ENCODE measurements at regions of chr10 and their contacts with region 1.

Region 1: DNA sequence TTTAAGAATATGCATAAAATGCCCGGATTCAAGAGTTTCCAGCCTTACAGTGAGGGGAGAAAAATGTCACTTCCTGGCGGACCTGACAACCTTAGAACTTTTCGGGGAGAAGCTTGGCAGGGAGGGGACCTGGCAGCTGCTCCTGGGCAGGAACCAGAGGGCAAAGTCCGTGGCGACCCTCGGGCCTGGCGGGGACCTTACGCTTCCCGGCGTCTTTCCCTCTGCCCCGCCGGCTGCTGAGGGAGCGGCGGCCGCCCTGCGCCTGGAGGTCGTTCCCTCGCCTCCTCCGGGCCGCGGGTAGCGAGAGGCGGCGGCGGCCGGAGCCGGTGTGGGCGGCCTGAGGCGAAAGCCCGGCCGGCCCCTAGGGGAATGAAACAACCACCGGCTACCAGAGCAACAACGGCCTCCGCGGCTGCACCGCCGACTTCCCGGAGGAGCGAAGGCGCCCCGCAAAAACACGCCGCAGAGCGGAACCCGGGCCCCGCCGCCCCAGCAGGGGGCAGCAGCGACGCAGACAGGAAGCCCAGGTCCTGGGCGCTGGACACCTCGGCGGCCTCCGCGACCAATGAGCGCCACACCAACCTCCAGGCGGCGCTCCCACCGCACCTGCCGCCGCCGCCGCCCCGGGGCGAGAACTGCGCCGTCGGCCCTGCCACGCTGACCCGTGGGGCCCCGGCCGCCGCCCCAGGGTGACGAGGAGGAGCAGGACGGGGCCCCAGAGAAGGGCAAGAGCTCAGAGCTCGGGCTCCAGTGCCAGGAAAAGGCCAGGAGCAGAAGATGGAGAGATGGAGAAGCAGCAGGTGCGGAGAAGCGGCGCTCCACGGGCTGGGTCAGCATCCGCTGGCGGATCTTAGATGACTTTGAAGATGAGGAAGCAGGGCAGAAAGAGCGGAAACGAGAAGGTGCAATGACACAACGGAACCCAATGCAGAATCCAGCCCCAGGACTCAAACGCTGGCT is 10.5 kb upstream of the ACSM6 start:
- DNase-seq: peak; percentile 89 to 95
- H3K4me3 ChIP-seq: peak overlapping the region; percentile 46
- H3K4me3 Mint-ChIP-seq: peak overlapping the region; percentile 72
- H3K27ac Mint-ChIP-seq: peak overlapping the region; percentile 89
- H3K4me1 ChIP-seq: peaks cover 38% of the 10 kb centered on the region
- H3K4me1 Mint-ChIP-seq: peaks cover 32% of the 10 kb centered on the region
- H3K27me3 ChIP-seq: no peaks in the 10 kb centered on the region
- H3K27me3 Mint-ChIP-seq: no peaks in the 10 kb centered on the region
- CTCF ChIP-seq: peak; percentile 90 to 94

Region 2: GRCh38 chr10:94630017-94630688 is 553.4 kb before region 1 on chr10:
- CTCF ChIA-PET with region 1: no interaction called
- POLR2A ChIA-PET with region 1: no interaction called
- intact Hi-C with region 1: loop called (anchors 1 kb)
- DNase-seq: peak in 1 of 2 experiments; percentile 29
- H3K4me3 ChIP-seq: no peak overlapping the region
- H3K4me3 Mint-ChIP-seq: no peak overlapping the region
- H3K27ac Mint-ChIP-seq: peak overlapping the region; percentile 42
- H3K4me1 ChIP-seq: peaks cover 43% of the 10 kb centered on the region
- H3K4me1 Mint-ChIP-seq: peaks cover 20% of the 10 kb centered on the region
- H3K27me3 ChIP-seq: no peaks in the 10 kb centered on the region
- H3K27me3 Mint-ChIP-seq: no peaks in the 10 kb centered on the region
- CTCF ChIP-seq: peak; percentile 55 to 59

Region 3: DNA sequence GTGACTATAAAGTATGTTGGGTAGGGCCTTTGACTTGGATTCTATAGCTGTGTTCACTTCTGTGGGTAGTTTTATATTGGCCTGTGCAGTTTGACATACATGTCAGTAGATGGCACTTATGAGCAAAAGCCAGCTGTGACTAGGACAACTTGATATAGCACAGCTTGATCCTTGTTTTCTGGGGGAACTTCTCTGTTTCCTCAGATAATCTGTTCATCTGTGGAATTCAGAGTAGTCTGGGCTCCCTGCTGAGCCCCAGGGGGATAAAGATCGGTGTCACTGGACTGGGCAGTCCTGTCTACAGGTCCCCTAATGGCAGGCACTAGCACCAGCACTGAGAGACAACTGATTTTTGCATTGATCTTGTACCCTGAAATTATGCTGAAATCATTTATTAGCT is 219.7 kb before region 1 on chr10:
- CTCF ChIA-PET with region 1: no interaction called
- POLR2A ChIA-PET with region 1: no interaction called
- intact Hi-C with region 1: loop called (anchors 2 kb)
- DNase-seq: peak; percentile 53 to 54
- H3K4me3 ChIP-seq: no peak overlapping the region
- H3K4me3 Mint-ChIP-seq: no peak overlapping the region
- H3K27ac Mint-ChIP-seq: no peak overlapping the region
- H3K4me1 ChIP-seq: no peaks in the 10 kb centered on the region
- H3K4me1 Mint-ChIP-seq: no peaks in the 10 kb centered on the region
- H3K27me3 ChIP-seq: no peaks in the 10 kb centered on the region
- H3K27me3 Mint-ChIP-seq: no peaks in the 10 kb centered on the region
- CTCF ChIP-seq: peak; percentile 73 to 77

Region 4: GRCh38 chr10:95221124-95221523 is 37.6 kb after region 1 on chr10:
- CTCF ChIA-PET with region 1: no interaction called
- POLR2A ChIA-PET with region 1: no interaction called
- intact Hi-C with region 1: loop called (anchors 5 kb)
- DNase-seq: peak; percentile 65 to 76
- H3K4me3 ChIP-seq: no peak overlapping the region
- H3K4me3 Mint-ChIP-seq: no peak overlapping the region
- H3K27ac Mint-ChIP-seq: peak overlapping the region; percentile 76
- H3K4me1 ChIP-seq: peaks cover 28% of the 10 kb centered on the region
- H3K4me1 Mint-ChIP-seq: no peaks in the 10 kb centered on the region
- H3K27me3 ChIP-seq: no peaks in the 10 kb centered on the region
- H3K27me3 Mint-ChIP-seq: no peaks in the 10 kb centered on the region
- CTCF ChIP-seq: no peak

Region 5: DNA sequence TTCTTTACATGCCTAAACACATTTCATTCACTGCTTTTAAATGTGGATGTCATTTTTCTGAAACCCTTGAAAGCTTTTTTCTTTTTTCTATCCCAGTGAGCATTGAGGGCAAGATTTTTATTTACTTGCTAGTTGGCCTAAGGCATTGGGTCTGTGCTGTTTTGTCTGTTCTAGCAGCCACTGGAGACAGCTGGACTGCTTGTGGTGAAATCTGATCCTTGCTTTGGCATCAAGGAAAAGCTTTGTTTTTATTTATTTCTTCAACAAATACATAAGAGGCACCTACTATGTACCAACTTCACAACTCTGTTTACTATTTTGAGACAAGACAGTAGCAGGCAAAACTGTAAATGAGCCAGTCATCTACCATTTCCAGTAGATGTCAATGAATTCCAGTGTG is 135.7 kb after region 1 on chr10:
- CTCF ChIA-PET with region 1: no interaction called
- POLR2A ChIA-PET with region 1: no interaction called
- intact Hi-C with region 1: no loop called
- DNase-seq: no peak
- H3K4me3 ChIP-seq: no peak overlapping the region
- H3K4me3 Mint-ChIP-seq: no peak overlapping the region
- H3K27ac Mint-ChIP-seq: no peak overlapping the region
- H3K4me1 ChIP-seq: peaks cover 17% of the 10 kb centered on the region
- H3K4me1 Mint-ChIP-seq: peaks cover 7% of the 10 kb centered on the region
- H3K27me3 ChIP-seq: no peaks in the 10 kb centered on the region
- H3K27me3 Mint-ChIP-seq: no peaks in the 10 kb centered on the region
- CTCF ChIP-seq: no peak

Region 6: GRCh38 chr10:95337423-95338160 is 154.0 kb after region 1 on chr10:
- CTCF ChIA-PET with region 1: interaction called, 12 read pairs
- POLR2A ChIA-PET with region 1: no interaction called
- intact Hi-C with region 1: no loop called
- DNase-seq: no peak
- H3K4me3 ChIP-seq: no peak overlapping the region
- H3K4me3 Mint-ChIP-seq: no peak overlapping the region
- H3K27ac Mint-ChIP-seq: peak overlapping the region; percentile 18
- H3K4me1 ChIP-seq: peaks cover 42% of the 10 kb centered on the region
- H3K4me1 Mint-ChIP-seq: peaks cover 11% of the 10 kb centered on the region
- H3K27me3 ChIP-seq: no peaks in the 10 kb centered on the region
- H3K27me3 Mint-ChIP-seq: no peaks in the 10 kb centered on the region
- CTCF ChIP-seq: no peak

Region 7: GRCh38 chr10:95363303-95363912 is 179.9 kb after region 1 on chr10:
- CTCF ChIA-PET with region 1: interaction called, 7 read pairs
- POLR2A ChIA-PET with region 1: no interaction called
- intact Hi-C with region 1: loop called (anchors 1 kb)
- DNase-seq: peak; percentile 52 to 74
- H3K4me3 ChIP-seq: no peak overlapping the region
- H3K4me3 Mint-ChIP-seq: no peak overlapping the region
- H3K27ac Mint-ChIP-seq: peak overlapping the region; percentile 31
- H3K4me1 ChIP-seq: peaks cover 37% of the 10 kb centered on the region
- H3K4me1 Mint-ChIP-seq: peaks cover 31% of the 10 kb centered on the region
- H3K27me3 ChIP-seq: no peaks in the 10 kb centered on the region
- H3K27me3 Mint-ChIP-seq: no peaks in the 10 kb centered on the region
- CTCF ChIP-seq: peak; percentile 83 to 91

Measured in Caco-2 (cell line).